AG04450 (cell line): ENCODE measurements at regions of chr2 and their contacts with region 1.

Region 1: DNA sequence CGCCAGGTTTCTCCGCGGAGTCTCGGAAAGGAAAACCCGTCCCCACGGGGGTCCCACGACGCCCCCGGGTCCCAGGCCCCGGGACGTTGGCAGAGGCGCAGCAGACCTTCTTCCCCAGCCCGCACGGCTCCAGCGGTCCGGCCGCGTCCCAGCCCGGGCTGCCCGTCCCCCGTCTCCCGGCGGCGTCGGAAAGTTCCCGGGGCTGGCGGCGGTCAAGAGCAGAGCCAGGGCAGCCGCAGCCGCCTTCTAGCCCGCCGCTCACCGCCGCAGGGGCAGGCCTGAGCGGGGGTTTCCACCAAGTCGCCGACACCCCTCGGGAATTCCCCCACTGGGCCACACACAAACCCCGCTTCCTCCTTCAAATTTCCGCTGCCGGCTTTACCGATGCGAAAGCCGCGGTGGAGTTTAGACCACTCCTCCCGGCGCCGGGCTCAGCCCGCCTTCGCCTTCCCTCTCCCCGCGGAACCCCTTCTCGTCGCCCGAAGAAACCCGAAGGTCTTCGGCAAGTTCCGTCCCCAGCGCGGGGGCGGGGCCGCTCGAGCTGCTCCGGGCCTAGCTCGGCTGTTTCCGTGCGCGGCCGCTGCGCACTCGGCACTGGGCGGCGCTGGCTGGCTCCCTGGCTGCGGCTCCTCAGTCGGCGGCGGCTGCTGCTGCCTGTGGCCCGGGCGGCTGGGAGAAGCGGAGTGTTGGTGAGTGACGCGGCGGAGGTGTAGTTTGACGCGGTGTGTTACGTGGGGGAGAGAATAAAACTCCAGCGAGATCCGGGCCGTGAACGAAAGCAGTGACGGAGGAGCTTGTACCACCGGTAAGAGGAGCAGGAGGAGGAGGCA is at the start of gene CREB1:
- DNase-seq: peak; percentile 97
- H3K4me3 ChIP-seq: peak within 1 kb of the TSS; percentile 98
- H3K27ac ChIP-seq: peak within 1 kb of the TSS; percentile 99
- H3K27me3 ChIP-seq: no peaks in the 10 kb centered on the region
- CTCF ChIP-seq: no peak
- polyA plus RNA-seq, gene CREB1: 34.0 and 38.3 TPM in 2 replicates

Region 2: GRCh38 chr2:207487650-207488311 is 41.8 kb before region 1 on chr2:
- CTCF ChIA-PET with region 1: interaction called, 4 read pairs
- POLR2A ChIA-PET with region 1: interaction called, 15 read pairs
- DNase-seq: peak; percentile 72
- H3K4me3 ChIP-seq: no peak overlapping the region
- H3K27ac ChIP-seq: no peak overlapping the region
- H3K27me3 ChIP-seq: no peaks in the 10 kb centered on the region
- CTCF ChIP-seq: peak; percentile 54

Region 3: DNA sequence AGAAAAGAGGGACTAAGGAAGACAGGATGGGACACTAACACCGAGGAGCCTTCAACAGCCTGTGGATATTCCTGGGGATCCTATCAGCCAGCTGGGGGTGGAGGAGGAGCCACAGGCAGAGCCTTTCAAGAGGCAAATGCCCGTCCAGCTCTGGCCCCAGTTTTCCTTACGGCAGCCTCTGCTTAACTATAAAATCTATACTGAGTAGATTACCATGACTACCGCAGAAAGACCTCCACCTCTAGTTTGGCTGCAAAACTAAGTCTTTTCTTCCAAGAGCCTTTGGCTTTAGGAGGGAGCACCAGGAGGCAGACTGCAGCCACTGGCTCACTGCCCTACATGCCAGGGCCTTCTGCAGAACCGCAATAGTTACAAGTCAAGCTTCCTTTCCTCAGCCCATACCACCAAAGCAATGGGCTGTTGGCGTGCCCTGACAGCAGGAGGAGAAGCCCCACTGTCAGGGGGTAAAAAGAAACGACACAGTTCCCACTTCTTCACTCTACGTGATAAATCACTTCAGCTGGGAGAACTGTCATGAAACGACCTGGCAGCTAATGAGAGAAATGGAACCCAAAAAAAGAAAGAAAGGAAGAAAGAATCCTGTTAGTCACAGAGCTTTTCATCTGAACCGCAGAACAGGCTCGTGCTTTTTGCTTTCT is 24.9 kb before region 1 on chr2:
- CTCF ChIA-PET with region 1: interaction called, 4 read pairs
- POLR2A ChIA-PET with region 1: interaction called, 20 read pairs
- DNase-seq: no peak
- H3K4me3 ChIP-seq: no peak overlapping the region
- H3K27ac ChIP-seq: peak overlapping the region; percentile 43
- H3K27me3 ChIP-seq: no peaks in the 10 kb centered on the region
- CTCF ChIP-seq: no peak

Region 4: GRCh38 chr2:207617011-207617691 is 87.6 kb after region 1 on chr2:
- CTCF ChIA-PET with region 1: interaction called, 3 read pairs
- POLR2A ChIA-PET with region 1: interaction called, 22 read pairs
- DNase-seq: peak; percentile 96
- H3K4me3 ChIP-seq: peak overlapping the region; percentile 27
- H3K27ac ChIP-seq: peak overlapping the region; percentile 99
- H3K27me3 ChIP-seq: no peaks in the 10 kb centered on the region
- CTCF ChIP-seq: no peak

Region 5: DNA sequence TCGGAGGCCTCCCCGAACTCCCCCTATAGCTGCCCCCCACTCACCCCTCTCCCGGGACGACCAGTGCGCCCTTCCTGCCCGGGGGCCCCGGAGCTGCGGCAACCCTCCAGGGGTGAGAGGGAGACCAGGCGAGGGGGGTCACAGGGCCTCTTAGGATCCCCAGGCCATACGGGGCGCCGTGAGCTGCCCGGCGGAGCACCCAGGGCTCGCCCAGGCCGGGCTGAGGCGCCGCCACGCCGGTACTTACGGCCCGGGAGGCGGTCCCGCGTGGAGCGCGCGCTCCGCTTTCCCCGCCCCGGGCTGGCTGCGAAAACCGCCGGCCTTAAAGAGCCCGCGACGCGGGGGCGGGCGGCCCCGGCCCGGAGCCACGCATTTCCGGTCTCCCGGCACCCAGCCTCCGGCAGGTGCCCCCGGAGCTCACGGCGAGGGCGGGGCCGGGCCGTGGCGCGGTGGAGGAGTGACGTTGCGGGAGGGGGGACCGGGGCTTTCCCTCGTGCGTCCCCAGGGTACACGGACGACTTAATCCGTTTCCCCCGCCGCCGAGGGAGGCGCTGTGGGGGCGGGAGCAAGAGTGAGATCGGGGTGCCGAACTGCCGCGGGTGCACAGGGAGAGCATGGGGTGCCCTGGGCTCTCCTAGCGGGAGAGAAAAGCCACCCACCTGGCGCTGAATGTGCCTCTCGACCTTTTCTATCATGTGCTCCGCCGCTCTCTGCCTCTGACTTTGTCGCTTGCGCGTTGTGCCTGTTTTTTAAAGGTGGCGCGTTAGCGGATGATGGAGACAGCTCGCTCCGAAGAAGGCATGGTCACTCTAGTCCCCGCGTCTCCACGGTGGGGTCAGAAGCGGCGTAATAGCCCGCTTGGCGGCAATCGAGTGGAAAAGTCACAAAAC is 95.7 kb after region 1 on chr2 and contains the start of gene METTL21A:
- CTCF ChIA-PET with region 1: interaction called, 4 read pairs
- POLR2A ChIA-PET with region 1: interaction called, 29 read pairs
- DNase-seq: no peak
- H3K4me3 ChIP-seq: peak within 1 kb of the TSS; percentile 91
- H3K27ac ChIP-seq: peak within 1 kb of the TSS; percentile 96
- H3K27me3 ChIP-seq: no peaks in the 10 kb centered on the region
- CTCF ChIP-seq: peak; percentile 52
- polyA plus RNA-seq, gene METTL21A: 18.1 and 20.3 TPM in 2 replicates

Region 6: DNA sequence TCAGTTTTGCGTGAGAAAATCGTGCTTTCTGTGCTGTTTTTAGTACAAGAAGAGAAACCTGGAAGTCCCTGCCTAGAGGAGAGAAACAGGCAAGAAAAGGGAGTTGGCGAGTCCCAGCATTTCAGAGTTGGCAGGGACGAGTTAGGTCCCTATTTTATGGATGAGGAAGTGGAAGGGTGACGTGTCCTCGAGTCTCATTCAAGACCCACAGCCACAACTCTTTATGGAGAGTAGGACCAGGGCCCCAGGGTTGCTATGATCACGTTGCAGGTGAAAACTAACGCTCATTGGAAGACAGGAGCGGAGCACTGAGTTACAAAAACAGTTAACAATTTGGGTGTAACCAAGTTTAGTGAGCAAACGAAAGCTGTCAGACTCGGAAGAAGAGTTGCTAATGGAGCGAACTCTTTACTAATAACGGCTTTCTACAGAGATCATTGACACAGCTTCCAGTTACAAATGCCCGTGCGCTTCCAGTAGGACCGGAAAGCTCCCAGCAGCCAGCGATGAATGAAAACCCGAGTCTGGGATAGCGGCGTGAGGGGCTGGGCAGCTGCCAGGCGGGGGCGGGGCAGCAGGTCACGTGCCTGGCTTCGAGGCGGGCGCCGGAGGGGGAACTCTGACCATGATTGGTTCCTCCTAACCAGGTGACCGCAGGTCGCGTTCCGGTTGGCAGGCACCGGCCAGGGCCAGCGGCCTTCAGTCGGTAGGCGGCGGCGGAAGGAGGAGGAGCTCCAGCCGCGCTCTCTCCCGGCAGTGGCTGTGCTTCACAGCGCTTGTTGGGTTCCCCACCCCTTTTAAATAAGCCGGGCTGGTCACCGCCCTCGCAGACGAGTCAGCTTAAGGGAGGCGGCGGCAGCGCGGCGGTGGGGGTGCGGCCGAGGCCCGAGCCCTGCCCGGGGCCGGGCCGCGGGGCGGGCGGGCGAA is 181.5 kb after region 1 on chr2 and contains the start of gene CCNYL1:
- CTCF ChIA-PET with region 1: no interaction called
- POLR2A ChIA-PET with region 1: interaction called, 13 read pairs
- DNase-seq: peak; percentile 98
- H3K4me3 ChIP-seq: peak within 1 kb of the TSS; percentile 89
- H3K27ac ChIP-seq: peak within 1 kb of the TSS; percentile 73
- H3K27me3 ChIP-seq: no peaks in the 10 kb centered on the region
- CTCF ChIP-seq: peak; percentile 18; the same call in 1 of the 2 replicates
- polyA plus RNA-seq, gene CCNYL1: 15.7 and 20.5 TPM in 2 replicates

Region 7: DNA sequence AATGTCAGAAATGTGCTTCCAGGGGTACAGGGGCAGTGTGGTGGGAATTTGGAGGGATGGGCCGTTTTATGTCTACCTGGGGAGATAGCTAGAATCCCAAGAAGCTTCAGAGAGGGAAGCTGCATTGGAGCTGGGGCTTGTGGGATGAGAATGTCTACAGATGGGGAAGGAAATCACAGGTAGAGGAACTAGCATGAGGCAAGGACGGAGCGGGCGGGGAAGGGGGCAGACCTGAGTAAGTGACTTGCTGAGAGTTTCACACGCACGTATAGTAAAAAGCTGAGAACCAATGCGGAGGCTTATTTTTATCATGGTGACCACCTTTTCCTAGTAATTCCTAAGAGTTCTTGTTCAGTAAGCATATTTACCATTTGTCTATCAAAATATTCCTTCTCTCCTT is 654.0 kb after region 1 on chr2:
- CTCF ChIA-PET with region 1: no interaction called
- POLR2A ChIA-PET with region 1: no interaction called
- DNase-seq: no peak
- H3K4me3 ChIP-seq: no peak overlapping the region
- H3K27ac ChIP-seq: no peak overlapping the region
- H3K27me3 ChIP-seq: peaks cover 12% of the 10 kb centered on the region
- CTCF ChIP-seq: no peak